ENCODE measurements at regions of chr19 and their contacts with region 1.

Region 1: DNA sequence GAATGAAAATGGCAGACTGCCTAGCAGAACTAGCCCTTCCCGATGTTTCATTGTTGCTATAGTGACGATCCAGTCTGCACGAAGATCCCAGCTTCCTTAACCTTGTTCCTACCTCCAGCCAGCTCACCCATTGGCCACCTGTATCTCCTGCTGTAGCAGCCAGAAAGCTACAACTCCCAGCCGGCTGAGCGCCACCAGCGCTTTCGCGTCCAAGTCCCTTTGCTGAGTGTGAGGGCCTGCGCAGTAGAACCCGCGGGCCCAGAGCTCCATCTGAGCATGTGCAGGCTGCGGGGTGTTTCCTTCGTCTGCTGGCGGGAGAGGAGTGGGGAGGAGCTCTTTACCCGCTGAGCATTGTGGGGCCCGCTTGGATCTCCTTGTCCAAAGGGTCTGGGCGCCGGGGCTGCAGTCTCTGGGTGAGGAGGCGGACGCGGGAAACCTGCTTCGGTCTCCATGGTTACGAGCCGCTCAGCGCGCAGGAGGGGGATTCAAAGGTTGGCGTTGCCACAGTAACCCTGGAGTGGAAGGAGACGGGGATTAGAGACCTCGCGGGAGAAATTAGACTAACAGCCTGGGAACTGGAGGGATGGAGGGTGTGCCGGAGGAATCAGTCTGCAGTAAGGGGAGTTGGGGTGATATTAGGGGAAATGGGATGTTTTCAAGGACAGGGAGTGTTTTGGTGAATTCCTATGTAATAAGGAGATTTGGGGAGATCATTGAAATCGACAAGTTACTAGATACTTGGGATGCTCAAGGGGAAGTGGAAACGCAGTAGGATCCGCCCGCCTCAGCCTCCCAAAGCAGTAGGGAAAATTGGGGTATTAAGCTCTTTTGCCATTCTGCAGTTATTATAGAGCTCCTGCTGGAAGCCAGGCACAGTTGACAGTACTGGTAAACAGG is 33.5 kb downstream of the ZSWIM9 start:
- DNase-seq: peak; percentile 99
- H3K4me3 ChIP-seq: peak overlapping the region; percentile 57
- H3K27ac ChIP-seq: peak overlapping the region; percentile 72
- H3K4me1 ChIP-seq: peaks cover 6% of the 10 kb centered on the region
- H3K27me3 ChIP-seq: no peaks in the 10 kb centered on the region
- CTCF ChIP-seq: no peak

Region 2: DNA sequence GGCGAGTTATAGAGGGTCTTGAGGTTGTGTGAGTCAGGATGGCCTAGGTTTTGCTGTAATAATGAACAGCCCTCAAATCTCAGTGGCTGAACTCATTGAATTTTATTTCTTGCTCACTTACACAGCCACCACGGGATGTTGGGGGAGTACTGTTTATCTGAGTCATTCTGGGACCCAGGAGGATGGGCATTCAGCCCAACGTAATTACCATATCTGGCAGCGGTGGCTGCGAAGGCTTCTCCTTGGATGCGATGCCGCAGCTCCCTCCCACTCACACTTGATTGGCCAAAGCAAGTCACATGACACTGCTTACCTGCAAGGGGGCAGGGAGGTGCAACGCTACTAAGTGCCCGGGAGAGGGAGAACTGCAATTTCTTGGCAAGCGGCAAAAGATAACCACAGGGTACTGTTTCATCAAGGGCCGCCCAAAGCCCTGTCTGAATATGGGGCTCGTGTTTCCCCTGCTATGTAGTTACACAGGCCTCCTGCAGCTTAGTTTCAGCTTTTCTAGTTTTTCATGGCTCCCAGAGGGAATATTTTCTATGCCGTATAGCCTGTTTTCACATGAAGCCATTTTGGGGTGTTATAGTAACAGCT is 13.6 kb before region 1 on chr19:
- CTCF ChIA-PET with region 1: interaction called, 14 read pairs
- POLR2A ChIA-PET with region 1: interaction called, 3 read pairs
- intact Hi-C with region 1: no loop called
- DNase-seq: peak; percentile 98
- H3K4me3 ChIP-seq: no peak overlapping the region
- H3K27ac ChIP-seq: peak overlapping the region; percentile 46
- H3K4me1 ChIP-seq: peaks cover 9% of the 10 kb centered on the region
- H3K27me3 ChIP-seq: no peaks in the 10 kb centered on the region
- CTCF ChIP-seq: peak; percentile 67

Region 3: GRCh38 chr19:48249502-48250014 is 45.6 kb after region 1 on chr19:
- CTCF ChIA-PET with region 1: no interaction called
- POLR2A ChIA-PET with region 1: interaction called, 5 read pairs
- intact Hi-C with region 1: loop called (anchors 5 kb)
- DNase-seq: peak; percentile 98
- H3K4me3 ChIP-seq: peak overlapping the region; percentile 42
- H3K27ac ChIP-seq: peak overlapping the region; percentile 98
- H3K4me1 ChIP-seq: peaks cover 78% of the 10 kb centered on the region
- H3K27me3 ChIP-seq: no peaks in the 10 kb centered on the region
- CTCF ChIP-seq: no peak

Region 4: DNA sequence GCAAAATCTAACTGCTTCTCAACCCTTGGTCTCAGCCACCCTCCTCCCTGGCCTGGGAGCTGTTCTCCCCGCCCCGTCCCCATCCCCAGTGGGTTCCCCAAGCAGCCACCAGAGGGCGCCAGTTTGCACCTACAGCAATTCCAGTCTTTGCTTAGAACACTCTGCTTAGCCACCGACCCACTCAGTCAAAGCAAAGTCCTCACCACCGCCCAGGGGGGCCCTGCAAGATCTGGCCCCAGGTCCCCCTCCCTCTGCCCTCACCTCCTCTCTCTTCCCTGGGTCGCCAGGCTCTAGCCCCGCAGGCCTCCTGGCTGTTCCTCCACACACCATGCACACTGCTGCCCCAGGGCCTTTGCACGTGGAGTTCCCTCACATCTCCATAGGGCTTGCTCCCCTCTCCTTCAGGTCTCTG is 147.4 kb after region 1 on chr19:
- CTCF ChIA-PET with region 1: no interaction called
- POLR2A ChIA-PET with region 1: no interaction called
- intact Hi-C with region 1: no loop called
- DNase-seq: peak; percentile 76
- H3K4me3 ChIP-seq: no peak overlapping the region
- H3K27ac ChIP-seq: no peak overlapping the region
- H3K4me1 ChIP-seq: no peaks in the 10 kb centered on the region
- H3K27me3 ChIP-seq: no peaks in the 10 kb centered on the region
- CTCF ChIP-seq: peak; percentile 92